ENCODE measurements at regions of chr1 and their contacts with region 1.

Region 1: GRCh38 chr1:67749844-67750689 is 65.1 kb downstream of the GADD45A start:
- DNase-seq: peak; percentile 76
- H3K4me3 ChIP-seq: no peak overlapping the region
- H3K27ac ChIP-seq: peak overlapping the region; percentile 55
- H3K4me1 ChIP-seq: peaks cover 67% of the 10 kb centered on the region
- H3K27me3 ChIP-seq: no peaks in the 10 kb centered on the region
- CTCF ChIP-seq: no peak
- POLR2A ChIP-seq: no peak

Region 2: DNA sequence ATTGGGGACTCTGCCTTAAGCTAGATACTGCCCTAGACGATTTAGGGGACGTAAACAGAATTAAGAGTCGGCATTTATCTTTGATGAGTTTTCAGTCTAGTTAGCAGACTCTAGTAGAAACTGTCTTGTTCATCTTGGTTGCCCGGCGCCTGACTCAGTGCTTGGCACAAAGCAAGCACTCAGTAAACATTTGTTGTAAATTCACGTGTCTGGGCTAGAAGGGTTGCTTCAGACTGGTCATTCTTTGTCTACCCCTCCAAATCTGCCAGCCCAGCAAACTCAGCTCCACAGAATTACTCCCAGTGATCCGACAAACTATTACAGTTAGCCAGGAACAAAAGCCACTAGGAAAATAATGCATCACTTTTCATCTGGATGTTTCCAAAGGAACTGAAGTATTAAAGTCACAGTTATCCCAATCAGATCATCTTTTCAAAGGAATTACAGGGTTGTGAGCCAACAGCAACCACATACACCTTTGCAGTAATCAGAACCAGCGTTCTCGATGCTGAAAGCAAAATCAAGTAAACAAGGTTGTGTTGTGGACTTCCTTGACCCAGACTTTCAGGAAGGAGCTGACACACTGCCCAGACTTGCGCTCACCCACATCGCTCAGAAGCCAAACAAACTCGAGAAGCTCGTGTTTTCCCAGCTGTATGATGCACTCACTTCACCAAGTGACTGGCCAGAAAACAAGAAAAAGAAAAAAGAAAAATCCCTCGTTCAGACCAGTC is 131.6 kb before region 1 on chr1:
- CTCF ChIA-PET with region 1: no interaction called
- POLR2A ChIA-PET with region 1: no interaction called
- dilution Hi-C with region 1: no loop called
- intact Hi-C with region 1: loop called (anchors 2 kb)
- DNase-seq: peak; percentile 99
- H3K4me3 ChIP-seq: no peak overlapping the region
- H3K27ac ChIP-seq: peak overlapping the region; percentile 92
- H3K4me1 ChIP-seq: peaks cover 24% of the 10 kb centered on the region
- H3K27me3 ChIP-seq: no peaks in the 10 kb centered on the region
- CTCF ChIP-seq: no peak
- POLR2A ChIP-seq: peak; percentile 41

Region 3: GRCh38 chr1:67713057-67713846 is 36.8 kb before region 1 on chr1:
- CTCF ChIA-PET with region 1: interaction called, 4 read pairs
- POLR2A ChIA-PET with region 1: no interaction called
- dilution Hi-C with region 1: no loop called
- intact Hi-C with region 1: loop called (anchors 1 kb)
- DNase-seq: peak; percentile 92
- H3K4me3 ChIP-seq: no peak overlapping the region
- H3K27ac ChIP-seq: peak overlapping the region; percentile 64
- H3K4me1 ChIP-seq: peaks cover 45% of the 10 kb centered on the region
- H3K27me3 ChIP-seq: no peaks in the 10 kb centered on the region
- CTCF ChIP-seq: no peak
- POLR2A ChIP-seq: no peak

Region 4: GRCh38 chr1:67723620-67724019 is 26.4 kb before region 1 on chr1:
- CTCF ChIA-PET with region 1: interaction called, 5 read pairs
- POLR2A ChIA-PET with region 1: interaction called, 5 read pairs
- dilution Hi-C with region 1: no loop called
- intact Hi-C with region 1: loop called (anchors 1 kb)
- DNase-seq: peak; percentile 97
- H3K4me3 ChIP-seq: peak overlapping the region in 1 of 3 experiments; percentile 17
- H3K27ac ChIP-seq: peak overlapping the region; percentile 95
- H3K4me1 ChIP-seq: peaks cover 68% of the 10 kb centered on the region
- H3K27me3 ChIP-seq: no peaks in the 10 kb centered on the region
- CTCF ChIP-seq: no peak
- POLR2A ChIP-seq: peak; percentile 40

Region 5: GRCh38 chr1:67735806-67736627 is 14.1 kb before region 1 on chr1:
- CTCF ChIA-PET with region 1: interaction called, 4 read pairs
- POLR2A ChIA-PET with region 1: no interaction called
- dilution Hi-C with region 1: no loop called
- intact Hi-C with region 1: loop called (anchors 1 kb)
- DNase-seq: peak; percentile 98
- H3K4me3 ChIP-seq: peak overlapping the region in 1 of 3 experiments; percentile 25
- H3K27ac ChIP-seq: peak overlapping the region; percentile 89
- H3K4me1 ChIP-seq: peaks cover 38% of the 10 kb centered on the region
- H3K27me3 ChIP-seq: no peaks in the 10 kb centered on the region
- CTCF ChIP-seq: no peak
- POLR2A ChIP-seq: no peak

Region 6: DNA sequence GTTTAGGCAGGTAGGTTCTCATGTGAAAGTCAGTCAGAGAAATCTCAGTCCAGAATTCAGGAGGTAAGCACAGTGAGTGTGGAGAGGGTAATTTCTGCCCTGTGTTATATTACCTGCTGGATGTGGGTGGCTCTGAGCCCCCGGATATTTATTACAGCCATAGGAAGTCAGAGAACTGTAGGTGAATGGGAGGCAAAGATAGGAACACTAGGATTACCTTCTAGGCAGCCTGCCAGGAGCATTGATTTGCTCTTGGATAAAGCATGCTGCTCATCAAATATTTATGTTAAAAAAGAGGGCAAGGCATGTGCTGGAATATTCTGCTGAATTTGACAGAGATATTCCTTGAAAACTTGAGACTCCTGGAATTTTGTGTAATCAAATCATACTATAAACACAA is 74.7 kb after region 1 on chr1:
- CTCF ChIA-PET with region 1: no interaction called
- POLR2A ChIA-PET with region 1: no interaction called
- dilution Hi-C with region 1: no loop called
- intact Hi-C with region 1: no loop called
- DNase-seq: no peak
- H3K4me3 ChIP-seq: no peak overlapping the region
- H3K27ac ChIP-seq: no peak overlapping the region
- H3K4me1 ChIP-seq: peaks cover 4% of the 10 kb centered on the region
- H3K27me3 ChIP-seq: no peaks in the 10 kb centered on the region
- CTCF ChIP-seq: no peak
- POLR2A ChIP-seq: no peak

Region 7: DNA sequence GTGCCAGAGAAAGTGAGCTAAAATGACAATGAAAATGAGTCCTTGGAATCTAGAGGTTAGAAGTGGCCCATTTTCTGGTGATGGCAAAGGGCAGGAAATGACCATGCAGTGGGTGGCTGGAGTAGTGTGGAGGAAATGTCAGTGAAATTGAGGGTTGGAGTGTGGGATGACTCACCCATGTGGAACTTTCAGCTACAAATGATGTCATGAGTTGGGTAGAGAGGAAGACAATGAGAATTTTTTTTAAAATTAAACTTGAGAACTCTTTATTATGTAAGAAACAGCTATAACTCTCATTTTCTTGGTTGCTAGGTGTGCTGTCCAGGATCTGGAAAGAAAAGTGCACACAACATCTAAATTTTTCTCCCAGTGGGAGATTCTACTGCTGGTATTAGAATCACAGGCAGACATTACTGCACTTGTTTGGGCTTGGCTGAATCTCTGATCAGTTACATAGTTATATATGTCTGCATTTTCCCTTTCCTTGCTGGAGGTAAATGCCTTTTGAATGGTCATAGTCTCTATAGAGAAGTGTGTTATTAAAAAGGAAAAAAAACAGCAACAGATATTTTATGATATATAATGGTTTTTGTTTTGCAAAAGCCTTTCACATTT is 140.0 kb after region 1 on chr1:
- CTCF ChIA-PET with region 1: no interaction called
- POLR2A ChIA-PET with region 1: no interaction called
- dilution Hi-C with region 1: no loop called
- intact Hi-C with region 1: no loop called
- DNase-seq: peak; percentile 93
- H3K4me3 ChIP-seq: no peak overlapping the region
- H3K27ac ChIP-seq: peak overlapping the region; percentile 79
- H3K4me1 ChIP-seq: peaks cover 26% of the 10 kb centered on the region
- H3K27me3 ChIP-seq: no peaks in the 10 kb centered on the region
- CTCF ChIP-seq: no peak
- POLR2A ChIP-seq: no peak

Region 8: DNA sequence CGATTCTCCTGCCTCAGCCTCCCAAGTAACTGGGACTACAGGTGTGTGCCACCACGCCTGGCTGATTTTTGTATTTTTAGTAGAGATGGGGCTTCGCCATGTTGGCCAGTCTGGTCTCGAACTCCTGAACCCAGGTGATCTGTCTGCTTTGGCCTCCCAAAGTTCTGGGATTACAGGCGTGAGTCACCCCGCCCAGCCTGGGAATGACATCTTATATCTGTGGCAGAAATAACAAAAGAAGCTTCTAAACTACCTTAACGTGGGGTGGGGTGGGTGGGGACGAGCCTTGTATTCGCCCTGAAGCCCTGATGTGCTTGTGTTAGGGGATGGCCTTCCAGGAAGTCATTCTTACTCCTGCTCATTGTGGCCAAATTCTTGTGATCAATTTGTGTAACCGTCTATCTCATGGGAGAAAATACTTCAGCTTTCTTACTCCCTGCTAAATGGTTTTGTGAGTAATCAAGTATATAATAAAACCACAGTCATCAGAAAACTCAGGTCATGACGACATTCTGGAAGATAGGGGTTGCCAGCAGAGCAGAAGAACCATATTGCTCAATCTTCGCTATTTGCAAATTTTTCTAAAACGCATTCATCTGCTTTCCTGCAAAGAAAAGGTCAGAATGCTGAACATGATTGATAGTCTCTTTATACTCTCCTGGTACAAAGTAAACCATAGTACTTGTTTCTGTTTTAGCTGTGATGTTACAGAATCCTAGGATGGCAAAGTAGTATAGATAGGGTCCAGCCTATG is 237.2 kb after region 1 on chr1:
- CTCF ChIA-PET with region 1: no interaction called
- POLR2A ChIA-PET with region 1: no interaction called
- dilution Hi-C with region 1: no loop called
- intact Hi-C with region 1: no loop called
- DNase-seq: no peak
- H3K4me3 ChIP-seq: no peak overlapping the region
- H3K27ac ChIP-seq: no peak overlapping the region
- H3K4me1 ChIP-seq: no peaks in the 10 kb centered on the region
- H3K27me3 ChIP-seq: no peaks in the 10 kb centered on the region
- CTCF ChIP-seq: no peak
- POLR2A ChIP-seq: no peak